Right ventricle myocardium inferior (tissue), 1 donor: ENCODE measurements at regions of chr12 and their contacts with region 1.

Region 1: DNA sequence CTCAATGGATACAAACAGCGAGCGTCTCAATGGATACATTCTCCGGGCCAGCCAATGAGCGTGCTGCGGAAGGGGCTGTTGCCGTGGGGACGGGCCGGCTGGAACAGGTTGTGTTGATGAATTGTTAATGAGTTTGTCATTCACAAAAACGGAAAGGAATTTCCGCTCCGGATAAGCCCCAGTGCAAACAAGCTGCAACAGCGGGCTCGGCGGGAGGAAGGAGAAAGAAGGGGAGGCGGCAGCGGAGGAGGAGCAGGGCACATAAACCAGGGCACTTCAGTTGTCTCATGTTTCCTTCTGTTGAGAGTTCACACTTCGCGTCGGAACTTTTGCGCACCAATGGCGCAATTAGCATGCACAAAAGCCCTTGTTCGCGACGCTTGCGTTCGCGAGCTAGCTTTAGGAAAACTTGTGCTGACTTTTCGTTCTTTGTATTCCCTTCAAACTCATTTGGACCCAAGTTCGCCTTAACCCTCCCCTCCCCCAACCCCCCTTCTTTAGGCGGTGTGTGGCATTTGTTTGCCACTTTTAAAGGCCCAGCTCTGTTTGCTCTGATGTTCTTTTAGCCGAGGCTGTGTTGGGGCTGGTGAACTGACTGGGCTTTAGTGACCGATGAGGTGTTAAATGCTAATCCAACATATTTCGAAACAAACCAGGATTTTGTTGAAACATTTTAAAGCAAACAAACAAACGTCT is at the start of gene DUSP6:
- DNase-seq: peak; percentile 98
- ATAC-seq: peak; percentile 77
- total RNA-seq, gene DUSP6: 25.0 TPM

Region 2: DNA sequence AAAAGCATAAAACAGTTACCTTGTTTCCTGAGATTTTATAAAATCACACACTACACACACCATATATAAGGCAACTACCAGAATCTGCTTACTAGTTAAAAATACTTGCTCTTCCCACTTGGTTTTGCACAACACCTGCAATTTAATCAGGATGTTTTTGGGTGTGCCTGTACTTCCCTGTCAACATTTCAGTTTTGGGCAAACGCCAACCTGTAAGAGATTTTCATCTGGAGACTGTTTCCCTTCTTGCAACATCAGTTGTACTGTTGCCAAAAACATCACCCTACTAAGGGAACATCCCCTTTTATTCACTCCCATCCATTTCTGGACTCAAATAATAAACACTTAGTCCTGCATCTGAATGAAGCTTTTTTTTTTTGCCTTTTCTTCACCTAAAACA is 172.7 kb before region 1 on chr12:
- intact Hi-C with region 1: loop called (anchors 2 kb)
- DNase-seq: no peak
- ATAC-seq: peak; percentile 64

Region 3: DNA sequence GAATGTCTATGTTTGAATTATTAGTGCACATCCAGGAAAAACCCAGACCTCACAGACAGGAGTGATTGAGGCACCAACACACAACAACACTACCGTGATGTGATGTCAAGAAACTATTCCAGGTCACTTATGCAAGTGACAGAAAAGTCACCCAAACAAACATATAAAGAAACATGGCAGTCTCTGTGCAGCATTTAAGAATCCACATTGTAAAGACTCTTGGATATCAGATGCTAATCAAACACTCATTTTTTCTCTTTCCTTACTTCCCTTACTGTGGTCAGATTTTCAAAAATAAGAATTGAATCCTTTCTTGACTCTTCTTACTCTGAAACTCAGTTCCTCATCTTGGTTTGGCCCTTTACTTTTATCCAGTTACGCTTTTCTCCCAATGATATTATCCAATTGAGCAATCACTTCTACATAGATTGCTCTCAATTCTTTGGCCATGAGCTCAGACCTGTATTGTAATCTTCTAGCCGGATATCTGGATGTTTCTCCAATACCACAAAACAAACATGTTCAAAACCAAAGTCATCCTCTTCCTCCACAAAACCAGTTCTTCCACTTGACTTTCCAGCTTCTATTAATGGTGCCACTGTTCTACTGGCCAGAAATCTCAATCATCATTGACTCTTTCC is 115.8 kb before region 1 on chr12:
- intact Hi-C with region 1: loop called (anchors 5 kb)
- DNase-seq: no peak
- ATAC-seq: no peak

Region 4: GRCh38 chr12:89252284-89252683 is 100.4 kb before region 1 on chr12:
- intact Hi-C with region 1: no loop called
- DNase-seq: no peak
- ATAC-seq: peak; percentile 39

Region 5: GRCh38 chr12:89405626-89406345 is 53.1 kb after region 1 on chr12:
- intact Hi-C with region 1: no loop called
- DNase-seq: no peak
- ATAC-seq: no peak

Region 6: GRCh38 chr12:89524541-89525285 is 172.1 kb after region 1 on chr12 and contains the start of gene GALNT4:
- intact Hi-C with region 1: loop called (anchors 10 kb)
- DNase-seq: peak; percentile 94
- ATAC-seq: peak; percentile 96
- total RNA-seq, gene GALNT4: 2.3 TPM